Panc1 (cell line): ENCODE measurements at regions of chr13 and their contacts with region 1.

Region 1: GRCh38 chr13:95360464-95361097 is 59.3 kb upstream of the ABCC4 start:
- DNase-seq: peak; percentile 25
- ATAC-seq: peak; percentile 89
- H3K4me3 ChIP-seq: no peak overlapping the region
- H3K27ac ChIP-seq: no peak overlapping the region
- H3K4me1 ChIP-seq: 0 out of 2 replicates have a peak, but pooled peaks cover 4% of the 10 kb centered on the region
- H3K27me3 ChIP-seq: no peaks in the 10 kb centered on the region
- CTCF ChIP-seq: no peak

Region 2: DNA sequence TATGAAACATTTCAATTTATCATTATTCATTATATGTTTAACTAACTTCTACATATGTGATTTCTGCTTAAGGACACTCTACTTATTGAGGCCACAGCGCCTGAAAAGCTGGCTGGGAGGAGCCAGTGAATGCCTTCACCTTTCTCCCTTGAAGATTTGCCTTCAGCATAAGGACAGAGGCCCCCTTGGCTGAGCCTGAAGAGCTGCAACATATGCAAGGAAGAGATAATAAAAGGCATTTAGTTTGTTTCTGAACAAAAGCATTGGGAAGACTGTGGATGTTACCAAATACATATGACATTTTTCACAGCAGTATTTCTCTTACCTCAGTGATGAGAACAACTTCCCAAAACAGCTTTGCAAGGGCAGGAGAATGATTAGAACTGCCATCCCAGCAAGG is 151.5 kb before region 1 on chr13:
- CTCF ChIA-PET with region 1: interaction called, 11 read pairs
- POLR2A ChIA-PET with region 1: no interaction called
- in situ Hi-C with region 1: no loop called
- intact Hi-C with region 1: no loop called
- DNase-seq: no peak
- ATAC-seq: no peak
- H3K4me3 ChIP-seq: no peak overlapping the region
- H3K27ac ChIP-seq: peak overlapping the region; percentile 34; the same call in 1 of the 2 replicates
- H3K4me1 ChIP-seq: peaks cover 12% of the 10 kb centered on the region; the same call in 1 of the 2 replicates
- H3K27me3 ChIP-seq: no peaks in the 10 kb centered on the region
- CTCF ChIP-seq: no peak

Region 3: DNA sequence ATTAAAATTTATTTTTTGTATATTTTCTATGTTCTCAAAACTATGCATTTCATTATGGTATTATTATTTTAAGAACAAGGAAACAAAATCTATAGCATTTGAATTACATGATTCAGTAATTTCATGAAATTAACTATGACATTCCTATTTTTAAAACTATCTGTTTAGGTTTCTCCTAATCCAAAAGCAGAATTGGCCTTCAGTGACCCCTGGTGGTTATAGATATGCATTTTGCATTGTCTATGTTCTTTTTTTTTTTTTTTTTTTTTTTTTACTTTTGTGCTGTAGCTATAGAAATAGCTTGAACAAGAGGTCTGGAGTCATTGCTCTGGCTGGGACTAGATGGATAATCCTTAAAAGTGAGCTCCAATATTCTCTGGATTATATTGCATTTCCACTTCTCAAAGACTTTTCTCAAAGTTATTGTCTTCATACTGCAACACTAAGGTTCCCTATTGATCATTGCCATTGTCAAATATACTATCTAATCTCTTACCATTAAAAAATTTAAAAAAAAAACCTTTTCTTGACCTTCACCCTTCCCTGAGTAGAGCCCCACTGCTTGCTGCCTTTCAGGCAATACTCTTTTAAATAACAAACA is 300.5 kb after region 1 on chr13:
- CTCF ChIA-PET with region 1: no interaction called
- POLR2A ChIA-PET with region 1: no interaction called
- in situ Hi-C with region 1: no loop called
- intact Hi-C with region 1: no loop called
- DNase-seq: no peak
- ATAC-seq: no peak
- H3K4me3 ChIP-seq: no peak overlapping the region
- H3K27ac ChIP-seq: no peak overlapping the region
- H3K4me1 ChIP-seq: no peaks in the 10 kb centered on the region
- H3K27me3 ChIP-seq: no peaks in the 10 kb centered on the region
- CTCF ChIP-seq: peak; percentile 57; the same call in 1 of the 2 replicates